ENCODE measurements at regions of chr2 and their contacts with region 1.

Region 1: GRCh38 chr2:223247136-223247535 is 195.1 kb downstream of the KCNE4 start:
- DNase-seq: peak; percentile 24
- H3K4me3 ChIP-seq: no peak overlapping the region
- H3K27ac ChIP-seq: no peak overlapping the region
- H3K4me1 ChIP-seq: no peaks in the 10 kb centered on the region
- H3K27me3 ChIP-seq: no peaks in the 10 kb centered on the region
- CTCF ChIP-seq: peak; percentile 62 to 73

Region 2: DNA sequence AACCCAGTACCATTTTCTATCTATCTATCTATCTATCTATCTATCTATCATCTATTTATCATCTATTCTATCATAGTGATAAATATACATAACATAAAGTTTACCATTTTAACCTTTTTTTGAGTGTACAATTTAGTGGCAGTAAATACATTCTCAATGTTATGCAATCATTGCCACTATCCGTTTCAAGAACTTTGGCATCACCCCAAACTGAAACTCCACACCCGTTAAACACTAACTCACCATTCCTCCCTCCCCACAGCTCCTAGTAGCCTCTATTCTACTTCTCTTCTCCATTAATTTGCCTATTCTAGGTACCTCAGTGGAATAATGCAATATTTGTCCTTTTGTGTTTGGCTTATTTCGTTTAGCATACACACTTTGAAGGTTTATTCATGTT is 277.6 kb before region 1 on chr2:
- CTCF ChIA-PET with region 1: no interaction called
- dilution Hi-C with region 1: no loop called
- in situ Hi-C with region 1: no loop called
- intact Hi-C with region 1: loop called (anchors 1 kb)
- DNase-seq: no peak
- H3K4me3 ChIP-seq: no peak overlapping the region
- H3K27ac ChIP-seq: no peak overlapping the region
- H3K4me1 ChIP-seq: peaks cover 24% of the 10 kb centered on the region
- H3K27me3 ChIP-seq: no peaks in the 10 kb centered on the region
- CTCF ChIP-seq: no peak

Region 3: GRCh38 chr2:223068071-223068470 is 179.1 kb before region 1 on chr2:
- CTCF ChIA-PET with region 1: interaction called, 12 read pairs
- dilution Hi-C with region 1: no loop called
- in situ Hi-C with region 1: no loop called
- intact Hi-C with region 1: no loop called
- DNase-seq: no peak
- H3K4me3 ChIP-seq: no peak overlapping the region
- H3K27ac ChIP-seq: no peak overlapping the region
- H3K4me1 ChIP-seq: no peaks in the 10 kb centered on the region
- H3K27me3 ChIP-seq: no peaks in the 10 kb centered on the region
- CTCF ChIP-seq: no peak

Region 4: DNA sequence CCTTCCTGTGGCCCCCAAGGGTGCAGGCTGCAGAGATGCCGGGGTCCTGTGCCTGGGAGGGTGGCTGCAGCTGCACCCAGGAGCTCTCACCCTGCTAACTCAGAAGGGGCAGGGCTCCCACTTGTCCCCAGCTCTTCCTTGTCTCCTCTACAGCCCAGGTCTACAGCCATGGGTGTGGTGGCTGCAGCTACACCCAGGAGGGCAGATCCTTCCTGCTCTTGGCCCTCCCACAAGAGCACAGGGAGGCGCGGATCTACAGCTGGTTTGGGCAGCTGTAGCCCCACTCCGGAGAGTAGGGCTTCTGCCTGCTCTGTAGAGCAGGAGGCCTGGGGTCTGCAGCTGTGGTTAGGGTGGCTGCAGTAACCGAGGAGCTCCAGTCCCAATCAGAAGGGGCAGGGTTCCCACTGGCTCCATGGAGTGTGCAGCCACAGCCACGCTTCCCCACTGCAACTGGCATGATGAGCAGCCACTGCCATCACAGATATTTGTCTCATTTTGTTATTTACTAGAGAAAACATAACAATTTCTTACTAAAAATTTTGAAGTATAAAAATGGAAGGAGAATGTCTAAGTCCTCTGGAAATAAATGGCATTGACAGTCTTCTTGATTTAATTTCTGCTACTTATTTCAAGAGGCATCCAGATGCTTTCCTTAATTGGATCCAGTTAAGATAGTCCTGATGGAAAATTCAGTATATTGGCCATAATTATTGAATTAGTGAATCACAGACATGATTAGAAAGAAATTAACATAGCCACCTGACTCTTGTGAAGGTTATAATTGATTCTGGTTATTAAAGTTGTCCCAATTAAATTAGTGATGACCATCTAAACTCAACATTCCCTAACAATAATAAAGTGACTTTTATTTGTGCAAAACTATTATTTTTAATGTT is 38.5 kb after region 1 on chr2:
- CTCF ChIA-PET with region 1: no interaction called
- dilution Hi-C with region 1: no loop called
- in situ Hi-C with region 1: no loop called
- intact Hi-C with region 1: no loop called
- DNase-seq: no peak
- H3K4me3 ChIP-seq: no peak overlapping the region
- H3K27ac ChIP-seq: no peak overlapping the region
- H3K4me1 ChIP-seq: no peaks in the 10 kb centered on the region
- H3K27me3 ChIP-seq: no peaks in the 10 kb centered on the region
- CTCF ChIP-seq: no peak

Region 5: GRCh38 chr2:223338016-223338415 is 90.9 kb after region 1 on chr2:
- CTCF ChIA-PET with region 1: no interaction called
- dilution Hi-C with region 1: no loop called
- in situ Hi-C with region 1: no loop called
- intact Hi-C with region 1: no loop called
- DNase-seq: no peak
- H3K4me3 ChIP-seq: no peak overlapping the region
- H3K27ac ChIP-seq: no peak overlapping the region
- H3K4me1 ChIP-seq: no peaks in the 10 kb centered on the region
- H3K27me3 ChIP-seq: no peaks in the 10 kb centered on the region
- CTCF ChIP-seq: no peak

Region 6: GRCh38 chr2:223383315-223383714 is 136.2 kb after region 1 on chr2:
- CTCF ChIA-PET with region 1: interaction called, 4 read pairs
- dilution Hi-C with region 1: no loop called
- in situ Hi-C with region 1: no loop called
- intact Hi-C with region 1: loop called (anchors 1 kb)
- DNase-seq: no peak
- H3K4me3 ChIP-seq: no peak overlapping the region
- H3K27ac ChIP-seq: no peak overlapping the region
- H3K4me1 ChIP-seq: no peaks in the 10 kb centered on the region
- H3K27me3 ChIP-seq: no peaks in the 10 kb centered on the region
- CTCF ChIP-seq: no peak

Region 7: DNA sequence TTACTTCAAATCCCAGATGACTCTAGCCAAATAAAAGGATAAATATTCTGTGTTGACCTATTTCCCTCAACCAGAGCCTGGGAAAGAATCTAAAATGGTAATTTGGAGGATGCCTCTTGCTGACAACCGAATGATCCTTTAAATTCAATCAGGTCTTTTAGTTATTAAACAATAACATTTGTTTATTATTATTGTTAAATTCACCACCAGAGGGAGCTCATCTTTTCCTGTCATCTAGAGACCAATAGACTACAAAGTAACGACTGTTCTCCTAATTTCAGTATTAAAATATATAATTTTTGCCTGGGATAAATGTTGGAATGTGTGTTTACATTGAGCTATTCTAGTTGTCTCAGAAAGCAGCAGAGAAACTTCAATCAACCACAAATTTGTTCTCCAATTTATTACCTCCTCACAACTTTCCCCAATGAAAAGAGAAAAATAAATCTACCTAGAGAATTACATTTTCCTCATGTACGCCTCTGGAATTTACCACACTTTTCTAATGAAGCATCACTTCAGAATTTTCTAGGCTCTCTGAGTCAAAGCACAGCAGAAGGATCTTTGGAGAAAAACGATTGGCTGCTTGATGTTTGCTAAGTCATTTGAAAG is 212.3 kb after region 1 on chr2:
- CTCF ChIA-PET with region 1: no interaction called
- dilution Hi-C with region 1: no loop called
- in situ Hi-C with region 1: no loop called
- intact Hi-C with region 1: loop called (anchors 2 kb)
- DNase-seq: peak; percentile 12
- H3K4me3 ChIP-seq: no peak overlapping the region
- H3K27ac ChIP-seq: peak overlapping the region; percentile 1
- H3K4me1 ChIP-seq: peaks cover 17% of the 10 kb centered on the region
- H3K27me3 ChIP-seq: no peaks in the 10 kb centered on the region
- CTCF ChIP-seq: peak; percentile 29 to 43

Region 8: GRCh38 chr2:223613017-223613950 is 366.1 kb after region 1 on chr2:
- CTCF ChIA-PET with region 1: no interaction called
- dilution Hi-C with region 1: no loop called
- in situ Hi-C with region 1: no loop called
- intact Hi-C with region 1: loop called (anchors 5 kb)
- DNase-seq: peak; percentile 96
- H3K4me3 ChIP-seq: peak overlapping the region; percentile 25 to 41 (median 27)
- H3K27ac ChIP-seq: peak overlapping the region; percentile 41
- H3K4me1 ChIP-seq: peaks cover 5% of the 10 kb centered on the region
- H3K27me3 ChIP-seq: no peaks in the 10 kb centered on the region
- CTCF ChIP-seq: peak in 1 of 2 donors; percentile 14

Region 9: GRCh38 chr2:223674998-223675609 is 428.0 kb after region 1 on chr2:
- CTCF ChIA-PET with region 1: no interaction called
- dilution Hi-C with region 1: no loop called
- in situ Hi-C with region 1: no loop called
- intact Hi-C with region 1: loop called (anchors 5 kb)
- DNase-seq: peak; percentile 46
- H3K4me3 ChIP-seq: no peak overlapping the region
- H3K27ac ChIP-seq: no peak overlapping the region
- H3K4me1 ChIP-seq: no peaks in the 10 kb centered on the region
- H3K27me3 ChIP-seq: no peaks in the 10 kb centered on the region
- CTCF ChIP-seq: peak; percentile 81 to 87

Measured in mammary epithelial cell (primary cell).